OCI-LY7 (cell line): ENCODE measurements at regions of chr14 and their contacts with region 1.

Region 1: DNA sequence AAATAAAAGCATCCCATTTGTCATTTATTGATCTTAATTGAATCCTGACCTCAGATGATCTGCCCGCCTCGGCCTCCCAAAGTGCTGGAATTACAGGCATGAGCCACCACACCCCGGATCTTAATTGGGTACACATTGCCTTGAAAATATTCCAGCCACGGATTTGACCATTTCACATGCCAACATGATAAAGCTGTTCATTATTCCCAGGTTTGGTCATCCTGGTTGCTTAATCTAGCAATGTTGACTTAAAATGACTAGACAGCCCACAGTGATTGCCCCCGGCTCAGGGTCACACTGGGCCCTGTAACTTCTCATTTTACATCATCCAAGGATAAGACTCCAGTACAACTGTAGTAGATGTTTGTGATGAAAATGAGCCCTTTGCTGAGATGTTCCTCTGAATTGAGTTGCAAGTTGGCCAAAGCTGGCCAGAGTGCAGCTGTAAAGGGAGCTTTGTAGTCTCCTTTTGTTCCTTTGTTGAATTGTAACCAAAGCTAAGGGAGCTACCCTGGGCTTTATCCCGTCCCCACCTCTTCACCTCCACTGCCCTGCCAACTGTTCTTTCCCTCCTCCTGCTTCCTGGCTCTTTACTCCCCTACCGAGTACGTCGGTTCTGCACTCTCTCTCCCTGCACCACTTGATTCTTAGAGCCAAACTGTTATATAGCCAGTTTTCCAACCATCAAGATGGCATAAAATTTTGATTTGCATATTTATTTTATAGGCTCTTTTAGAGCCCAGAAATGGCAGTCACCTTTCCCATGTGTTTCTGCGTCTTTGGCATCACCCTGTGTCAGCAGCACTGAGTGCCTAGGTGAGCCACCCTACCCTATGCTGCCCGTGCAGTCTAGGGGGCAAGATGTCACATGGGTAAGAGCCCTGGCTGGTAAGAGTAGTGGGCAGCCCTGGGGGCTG is 141.3 kb upstream of the HIF1A start:
- DNase-seq: no peak
- H3K4me3 ChIP-seq: peak overlapping the region; percentile 6
- H3K27ac ChIP-seq: peak overlapping the region; percentile 83
- H3K4me1 ChIP-seq: peaks cover 54% of the 10 kb centered on the region
- CTCF ChIP-seq: no peak

Region 2: DNA sequence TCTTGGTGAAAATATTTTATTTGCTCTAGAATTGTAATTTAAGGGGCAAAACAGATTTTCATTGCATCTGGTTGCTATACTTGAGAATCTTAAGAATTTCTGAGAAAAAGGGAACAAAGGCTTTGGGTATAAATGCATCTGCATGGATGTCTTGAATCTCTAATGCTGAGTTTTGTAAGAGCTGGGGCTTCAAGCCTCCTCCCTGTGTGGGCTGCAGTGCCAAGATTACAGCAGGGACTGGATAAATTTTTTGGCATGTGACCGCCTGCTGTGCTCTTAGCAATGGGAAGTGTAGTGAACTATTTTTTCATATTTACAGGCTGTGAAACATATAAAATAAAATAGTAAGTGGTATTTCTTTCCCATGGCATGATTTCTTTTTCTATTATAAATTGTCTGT is 502.9 kb before region 1 on chr14:
- CTCF ChIA-PET with region 1: no interaction called
- POLR2A ChIA-PET with region 1: no interaction called
- intact Hi-C with region 1: no loop called
- DNase-seq: no peak
- H3K4me3 ChIP-seq: no peak overlapping the region
- H3K27ac ChIP-seq: no peak overlapping the region
- H3K4me1 ChIP-seq: no peaks in the 10 kb centered on the region
- CTCF ChIP-seq: no peak

Region 3: GRCh38 chr14:61322441-61323290 is 231.3 kb before region 1 on chr14:
- CTCF ChIA-PET with region 1: no interaction called
- POLR2A ChIA-PET with region 1: no interaction called
- intact Hi-C with region 1: no loop called
- DNase-seq: no peak
- H3K4me3 ChIP-seq: no peak overlapping the region
- H3K27ac ChIP-seq: no peak overlapping the region
- H3K4me1 ChIP-seq: no peaks in the 10 kb centered on the region
- CTCF ChIP-seq: no peak

Region 4: DNA sequence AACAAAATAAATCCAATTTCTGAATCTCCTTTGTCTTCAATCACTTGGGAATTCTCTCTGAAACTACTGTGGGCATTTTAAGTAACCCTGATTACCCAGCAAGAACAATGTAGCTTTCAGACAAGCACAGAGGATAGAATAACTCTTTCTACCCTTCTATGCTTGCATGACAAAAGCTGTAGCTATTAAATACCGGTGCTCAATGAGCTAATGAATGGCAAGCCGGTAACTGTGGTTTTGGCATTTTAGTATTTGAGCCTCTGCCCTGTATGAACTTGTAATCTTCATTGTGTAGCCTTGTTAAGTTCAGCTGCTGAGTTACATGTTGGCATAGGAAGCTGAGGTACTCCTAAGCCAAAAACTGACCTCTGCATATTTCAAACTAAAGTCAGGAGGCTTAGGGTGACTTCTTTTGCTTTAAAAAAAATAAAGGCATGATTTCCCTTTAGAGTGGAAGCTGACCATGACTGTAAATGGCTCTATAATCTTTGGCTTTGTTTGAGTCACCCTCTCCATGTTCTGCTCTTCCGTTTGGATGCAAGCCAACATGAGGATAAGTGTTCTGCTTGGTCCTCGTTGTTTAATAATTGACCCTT is 29.7 kb before region 1 on chr14:
- CTCF ChIA-PET with region 1: no interaction called
- POLR2A ChIA-PET with region 1: interaction called, 16 read pairs
- intact Hi-C with region 1: no loop called
- DNase-seq: no peak
- H3K4me3 ChIP-seq: no peak overlapping the region
- H3K27ac ChIP-seq: no peak overlapping the region
- H3K4me1 ChIP-seq: peaks cover 4% of the 10 kb centered on the region
- CTCF ChIP-seq: no peak

Region 5: GRCh38 chr14:61537563-61538463 is 16.2 kb before region 1 on chr14:
- CTCF ChIA-PET with region 1: interaction called, 3 read pairs
- POLR2A ChIA-PET with region 1: interaction called, 10 read pairs
- intact Hi-C with region 1: no loop called
- DNase-seq: peak; percentile 37
- H3K4me3 ChIP-seq: no peak overlapping the region
- H3K27ac ChIP-seq: no peak overlapping the region
- H3K4me1 ChIP-seq: peaks cover 13% of the 10 kb centered on the region
- CTCF ChIP-seq: no peak

Region 6: GRCh38 chr14:61644834-61645233 is 90.9 kb after region 1 on chr14:
- CTCF ChIA-PET with region 1: no interaction called
- POLR2A ChIA-PET with region 1: interaction called, 3 read pairs
- intact Hi-C with region 1: loop called (anchors 1 kb)
- DNase-seq: peak; percentile 90
- H3K4me3 ChIP-seq: peak overlapping the region; percentile 51
- H3K27ac ChIP-seq: peak overlapping the region; percentile 95
- H3K4me1 ChIP-seq: peaks cover 61% of the 10 kb centered on the region
- CTCF ChIP-seq: no peak